ENCODE measurements at regions of chr15 and their contacts with region 1.

Region 1: GRCh38 chr15:67150028-67150860 is 84.8 kb downstream of the SMAD3 start:
- DNase-seq: peak; percentile 48
- H3K4me3 Mint-ChIP-seq: peak overlapping the region; percentile 33
- H3K27ac Mint-ChIP-seq: peak overlapping the region; percentile 53
- H3K4me1 Mint-ChIP-seq: peaks cover 75% of the 10 kb centered on the region
- H3K27me3 Mint-ChIP-seq: no peaks in the 10 kb centered on the region

Region 2: DNA sequence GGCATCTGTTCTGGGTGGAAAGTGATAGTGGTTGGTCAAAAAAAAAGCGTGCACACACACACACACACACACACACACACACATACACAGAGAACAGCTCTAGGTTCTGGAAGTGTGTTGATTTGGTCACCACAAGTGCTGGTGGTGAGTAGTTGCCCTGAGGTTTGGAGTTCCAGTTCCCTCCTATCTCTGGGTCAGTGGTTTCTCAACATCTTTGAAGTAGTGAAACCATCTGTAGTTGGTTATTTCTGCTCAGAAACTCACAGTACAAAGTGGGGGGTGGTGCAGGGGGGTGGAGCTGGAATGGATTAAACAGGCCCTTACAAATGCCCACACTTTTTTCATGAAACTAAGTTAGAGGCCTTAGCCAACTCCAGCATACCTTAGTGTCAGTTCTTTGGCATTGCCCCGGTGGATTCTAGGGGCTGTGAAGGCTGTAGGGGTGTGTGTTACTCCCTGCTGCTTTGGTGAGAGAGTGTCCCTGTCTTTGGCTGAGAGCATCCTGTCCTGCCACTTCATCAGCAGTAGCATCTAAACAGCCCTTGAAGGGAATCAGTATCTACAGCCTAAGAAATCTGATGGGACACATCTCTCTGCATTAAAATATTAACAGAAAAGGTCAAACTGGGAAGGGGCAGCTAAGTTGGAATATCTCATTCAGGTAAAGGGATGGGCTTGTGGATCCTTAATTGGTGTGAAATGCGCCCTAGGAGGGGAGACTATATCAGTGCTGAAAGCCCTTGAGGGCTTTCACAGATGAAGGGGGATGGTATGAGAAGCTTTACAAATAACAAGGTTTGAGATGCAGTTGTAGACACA is 64.2 kb before region 1 on chr15:
- CTCF ChIA-PET with region 1: no interaction called
- POLR2A ChIA-PET with region 1: interaction called, 10 read pairs
- DNase-seq: peak; percentile 57
- H3K4me3 Mint-ChIP-seq: peak overlapping the region; percentile 37
- H3K27ac Mint-ChIP-seq: peak overlapping the region; percentile 95
- H3K4me1 Mint-ChIP-seq: peaks cover 99% of the 10 kb centered on the region
- H3K27me3 Mint-ChIP-seq: no peaks in the 10 kb centered on the region

Region 3: GRCh38 chr15:67175643-67176071 is 25.4 kb after region 1 on chr15:
- CTCF ChIA-PET with region 1: no interaction called
- POLR2A ChIA-PET with region 1: no interaction called
- DNase-seq: no peak
- H3K4me3 Mint-ChIP-seq: no peak overlapping the region
- H3K27ac Mint-ChIP-seq: peak overlapping the region; percentile 8
- H3K4me1 Mint-ChIP-seq: peaks cover 53% of the 10 kb centered on the region
- H3K27me3 Mint-ChIP-seq: no peaks in the 10 kb centered on the region

Measured in activated CD4-positive, alpha-beta memory T cell treated with anti-CD3 and anti-CD28 coated beads, Interleukin-2, amount 10 ng/mL, durations not matched to agents 7 days and 5 days (primary cell).